ENCODE measurements at regions of chr9 and their contacts with region 1.

Region 1: DNA sequence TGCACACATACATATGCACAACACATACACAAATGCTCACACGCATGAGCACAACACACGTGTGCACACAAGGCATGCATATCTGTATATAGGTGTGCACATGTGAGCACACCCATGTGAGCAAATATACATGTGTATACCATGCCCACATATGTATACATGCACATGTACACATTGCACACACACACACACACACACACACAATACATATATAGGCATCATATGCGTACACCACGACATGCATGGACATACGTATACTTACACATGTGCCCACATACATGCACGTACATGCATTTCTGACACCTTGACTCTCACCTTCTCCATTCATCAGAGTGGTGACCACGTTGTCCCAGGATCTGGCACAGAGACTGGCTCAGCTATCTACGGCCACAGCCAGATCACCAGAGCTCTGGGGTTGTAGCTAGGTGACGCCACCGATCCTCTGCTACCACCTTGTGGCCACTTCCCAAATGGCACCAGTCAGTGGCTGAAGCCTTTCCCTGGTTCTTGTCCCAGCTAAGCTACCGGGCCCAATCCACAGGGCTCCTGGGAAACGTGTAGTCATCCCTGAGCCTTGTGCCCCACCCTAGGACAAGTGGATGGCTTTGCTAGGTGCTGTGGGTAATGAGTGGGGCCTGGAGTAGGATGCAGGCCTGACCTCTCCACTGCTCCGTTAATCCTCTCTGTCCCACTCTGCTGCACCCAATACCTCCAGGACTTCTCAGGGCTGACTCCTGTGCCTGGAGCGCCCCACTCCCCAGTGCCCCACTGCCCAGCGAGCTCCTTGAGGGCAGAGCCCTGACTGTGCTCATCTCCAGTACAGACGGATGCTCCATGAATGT is 194.4 kb downstream of the RGS3 start:
- DNase-seq: peak; percentile 82
- H3K4me3 Mint-ChIP-seq: no peak overlapping the region
- H3K27ac Mint-ChIP-seq: no peak overlapping the region
- H3K4me1 Mint-ChIP-seq: no peaks in the 10 kb centered on the region
- H3K27me3 Mint-ChIP-seq: peaks cover 30% of the 10 kb centered on the region
- CTCF ChIP-seq: peak; percentile 97

Region 2: DNA sequence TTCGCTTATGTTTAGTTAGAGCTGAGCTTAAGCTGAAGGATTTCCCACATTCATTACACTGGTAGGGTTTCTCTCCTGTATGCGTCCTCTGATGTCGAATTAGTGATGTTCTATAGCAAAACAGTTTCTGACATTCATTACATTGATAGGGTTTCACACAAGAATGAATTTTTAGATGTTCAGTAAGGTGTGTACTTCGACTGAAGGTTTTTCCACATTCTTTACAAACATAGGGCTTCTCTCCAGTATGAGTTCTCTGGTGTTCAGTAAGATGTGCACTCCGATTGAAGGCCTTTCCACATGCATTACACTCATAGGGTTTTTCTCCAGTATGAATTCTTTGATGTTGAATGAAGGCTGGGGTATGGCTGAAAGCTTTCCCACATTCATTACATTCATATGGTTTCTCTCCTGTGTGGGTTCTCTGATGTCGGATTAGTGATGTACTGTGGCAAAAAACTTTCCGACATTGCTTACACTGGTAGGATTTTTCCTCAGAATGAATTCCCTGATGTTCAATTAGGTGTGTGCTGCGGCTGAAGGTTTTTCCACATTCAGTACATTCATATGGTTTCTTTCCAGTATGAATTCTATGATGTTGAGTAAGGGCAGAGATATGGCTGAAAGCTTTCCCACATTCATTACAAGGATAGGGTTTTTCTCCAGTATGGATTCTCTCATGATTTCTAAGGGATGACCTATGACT is 660.5 kb before region 1 on chr9:
- CTCF ChIA-PET with region 1: no interaction called
- POLR2A ChIA-PET with region 1: no interaction called
- intact Hi-C with region 1: no loop called
- DNase-seq: no peak
- H3K4me3 Mint-ChIP-seq: no peak overlapping the region
- H3K27ac Mint-ChIP-seq: no peak overlapping the region
- H3K4me1 Mint-ChIP-seq: no peaks in the 10 kb centered on the region
- H3K27me3 Mint-ChIP-seq: no peaks in the 10 kb centered on the region
- CTCF ChIP-seq: no peak

Region 3: DNA sequence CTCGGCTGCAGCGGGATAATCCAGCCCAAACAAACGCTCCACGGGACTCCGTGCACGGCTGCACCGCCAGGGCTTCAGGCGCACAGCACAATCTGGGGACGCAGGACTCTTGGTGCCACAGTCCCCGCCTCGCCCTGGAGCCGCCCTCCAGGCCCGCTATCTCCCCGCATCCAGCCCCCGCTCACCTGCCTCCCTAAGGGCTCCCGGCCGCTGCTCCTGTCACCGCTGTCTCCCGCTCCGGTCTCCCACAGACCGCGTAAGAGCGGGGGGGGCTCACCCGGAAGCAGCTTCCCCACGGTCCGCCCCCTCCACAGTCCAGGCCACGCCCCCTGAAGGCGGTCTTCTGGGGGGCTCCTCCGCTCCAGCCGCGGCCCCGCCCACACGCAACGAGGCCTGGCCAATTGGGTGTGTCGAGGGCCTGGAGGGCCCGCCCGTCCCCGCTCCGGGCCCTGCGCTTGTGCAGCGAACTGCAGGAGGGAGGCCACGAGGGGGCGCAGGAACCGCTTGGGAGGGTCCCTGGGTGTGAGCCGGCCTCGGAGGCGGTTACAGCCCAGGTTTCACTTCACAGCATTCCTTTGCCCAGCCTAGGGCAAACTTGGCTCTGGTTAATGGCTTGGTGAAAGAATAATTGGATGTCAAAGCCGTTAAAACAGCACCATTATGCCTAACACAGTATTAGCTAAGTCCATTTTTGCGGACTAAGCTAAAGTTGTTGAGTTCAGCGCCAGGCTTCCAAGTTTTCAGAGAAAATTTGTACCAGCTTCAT is 256.7 kb before region 1 on chr9 and contains the start of gene ALAD:
- CTCF ChIA-PET with region 1: interaction called, 27 read pairs
- POLR2A ChIA-PET with region 1: interaction called, 4 read pairs
- intact Hi-C with region 1: loop called (anchors 2 kb)
- DNase-seq: peak; percentile 98
- H3K4me3 Mint-ChIP-seq: peak within 1 kb of the TSS; percentile 97
- H3K27ac Mint-ChIP-seq: peak within 1 kb of the TSS; percentile 82
- H3K4me1 Mint-ChIP-seq: peaks cover 12% of the 10 kb centered on the region
- H3K27me3 Mint-ChIP-seq: no peaks in the 10 kb centered on the region
- CTCF ChIP-seq: peak; percentile 86
- total RNA-seq, gene ALAD: 6.6 and 7.8 TPM in 2 replicates

Region 4: DNA sequence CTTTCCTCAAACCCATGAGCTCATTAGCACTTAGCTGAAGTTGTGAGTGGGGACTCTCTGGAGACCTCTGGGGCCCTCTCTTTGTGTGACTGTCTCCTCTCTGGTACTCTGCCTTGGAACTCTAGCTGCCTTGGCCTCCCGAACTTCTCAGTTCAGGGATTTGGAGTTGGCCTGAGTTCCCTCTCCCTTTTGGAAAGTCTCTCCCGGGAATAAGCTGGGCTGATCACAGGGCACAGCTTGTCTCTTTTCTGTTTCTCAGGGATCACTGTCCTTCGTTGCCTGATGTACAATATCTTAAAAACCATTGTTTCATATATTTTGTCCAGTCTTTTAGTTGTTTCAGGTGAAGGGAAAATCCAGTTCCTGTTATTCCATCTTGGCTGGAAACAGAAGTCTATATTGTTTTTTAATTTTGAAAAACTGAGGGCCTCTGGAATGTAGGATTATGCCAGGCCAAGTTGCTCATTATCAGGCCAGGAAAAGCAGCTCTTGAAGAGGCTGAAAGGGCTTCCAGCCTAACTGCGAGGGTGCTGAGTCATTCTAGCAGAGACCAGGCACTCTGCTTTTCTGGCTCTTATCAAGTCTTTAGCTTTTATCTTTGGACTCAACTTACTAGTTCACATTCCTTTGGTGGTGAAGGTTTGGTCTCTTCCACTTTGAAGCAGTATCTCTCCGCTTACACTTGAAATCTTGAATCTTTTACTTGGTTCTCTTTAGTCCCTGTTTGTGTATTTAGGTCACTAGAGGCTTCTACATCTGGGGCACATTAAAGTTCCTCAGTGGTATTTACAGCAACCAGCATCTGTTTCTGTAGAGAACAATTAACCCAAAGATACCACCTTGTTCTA is 202.8 kb before region 1 on chr9:
- CTCF ChIA-PET with region 1: interaction called, 317 read pairs
- POLR2A ChIA-PET with region 1: interaction called, 3 read pairs
- intact Hi-C with region 1: no loop called
- DNase-seq: peak; percentile 40
- H3K4me3 Mint-ChIP-seq: no peak overlapping the region
- H3K27ac Mint-ChIP-seq: peak overlapping the region; percentile 24
- H3K4me1 Mint-ChIP-seq: peaks cover 10% of the 10 kb centered on the region
- H3K27me3 Mint-ChIP-seq: no peaks in the 10 kb centered on the region
- CTCF ChIP-seq: no peak

Region 5: DNA sequence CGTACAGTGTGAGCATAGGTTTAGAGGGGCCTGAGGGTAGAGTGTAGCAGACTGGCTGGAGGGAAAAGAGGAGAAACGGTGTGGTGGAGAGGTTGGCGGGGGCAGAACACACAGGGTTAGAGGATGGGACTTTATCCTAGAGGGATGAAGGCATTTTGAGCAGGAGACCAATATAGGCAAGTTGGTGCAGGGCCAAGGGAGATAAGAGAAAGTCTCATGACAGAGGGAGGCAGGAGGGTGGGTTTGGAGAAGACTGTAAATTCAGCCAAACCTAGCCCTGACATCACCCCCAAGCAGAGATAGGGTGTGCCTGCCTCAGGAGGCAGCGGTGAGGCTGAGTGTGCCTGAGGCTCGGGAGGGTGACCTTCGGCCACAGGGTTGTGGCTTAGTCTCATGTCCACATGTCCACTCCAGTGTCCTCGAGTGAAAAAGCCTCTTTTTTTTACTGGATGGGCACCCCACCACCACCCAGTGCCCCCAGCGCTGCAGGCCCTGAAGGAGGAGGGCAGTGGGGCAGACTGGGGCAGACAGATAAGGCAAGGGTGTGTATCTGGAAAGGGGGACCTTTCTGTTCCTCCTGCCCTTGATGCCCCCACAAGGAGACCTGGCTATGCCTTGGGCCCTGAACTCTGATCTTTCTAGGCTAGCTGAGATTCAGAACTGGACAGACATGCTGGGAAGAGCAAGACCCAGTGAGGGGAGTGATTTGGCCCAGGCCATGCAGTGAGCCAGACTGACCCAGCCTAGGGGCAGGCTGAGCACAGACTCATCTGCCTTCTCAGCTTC is 85.7 kb before region 1 on chr9:
- CTCF ChIA-PET with region 1: interaction called, 10 read pairs
- POLR2A ChIA-PET with region 1: no interaction called
- intact Hi-C with region 1: no loop called
- DNase-seq: no peak
- H3K4me3 Mint-ChIP-seq: no peak overlapping the region
- H3K27ac Mint-ChIP-seq: peak overlapping the region; percentile 84
- H3K4me1 Mint-ChIP-seq: peaks cover 30% of the 10 kb centered on the region
- H3K27me3 Mint-ChIP-seq: no peaks in the 10 kb centered on the region
- CTCF ChIP-seq: no peak

Region 6: DNA sequence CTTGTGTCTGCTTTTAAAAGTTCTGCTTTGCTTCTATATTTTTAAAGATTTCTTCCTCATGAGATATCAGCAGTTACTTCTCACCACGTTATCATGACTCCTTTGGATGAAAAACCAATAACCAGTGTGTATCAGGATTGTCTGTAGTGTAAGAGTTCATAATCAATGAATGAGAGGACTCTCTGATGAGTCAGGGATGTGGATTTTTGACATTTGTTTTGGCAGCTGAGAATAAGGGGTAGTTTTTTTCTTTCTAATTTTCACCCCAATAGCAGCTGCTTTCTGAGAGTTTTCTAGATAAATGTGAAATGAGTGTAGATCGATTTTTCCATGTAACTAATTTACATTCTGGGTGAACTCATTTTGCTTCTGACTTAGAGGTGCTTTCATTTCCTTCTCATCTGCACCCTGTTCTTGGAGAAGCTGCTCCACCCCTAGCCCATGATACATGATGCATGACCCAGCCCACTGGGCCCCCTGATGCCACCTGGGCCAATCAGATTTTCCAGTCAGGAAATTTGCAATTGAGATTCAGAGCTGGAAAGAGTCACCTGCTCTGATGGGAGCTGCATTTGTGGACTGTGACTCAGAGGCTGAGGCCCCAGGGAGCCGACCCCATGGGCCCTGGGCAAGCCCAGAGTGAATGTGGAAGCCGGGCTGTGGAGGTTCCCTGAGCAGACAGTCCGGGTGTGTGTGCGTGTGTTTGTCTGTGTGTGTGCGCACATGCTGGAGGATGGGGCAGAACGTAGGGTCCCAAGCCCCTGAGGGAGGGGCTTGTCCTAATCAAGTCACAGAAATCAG is 35.1 kb before region 1 on chr9:
- CTCF ChIA-PET with region 1: interaction called, 21 read pairs
- POLR2A ChIA-PET with region 1: no interaction called
- intact Hi-C with region 1: no loop called
- DNase-seq: peak; percentile 62
- H3K4me3 Mint-ChIP-seq: no peak overlapping the region
- H3K27ac Mint-ChIP-seq: no peak overlapping the region
- H3K4me1 Mint-ChIP-seq: no peaks in the 10 kb centered on the region
- H3K27me3 Mint-ChIP-seq: no peaks in the 10 kb centered on the region
- CTCF ChIP-seq: no peak

Region 7: DNA sequence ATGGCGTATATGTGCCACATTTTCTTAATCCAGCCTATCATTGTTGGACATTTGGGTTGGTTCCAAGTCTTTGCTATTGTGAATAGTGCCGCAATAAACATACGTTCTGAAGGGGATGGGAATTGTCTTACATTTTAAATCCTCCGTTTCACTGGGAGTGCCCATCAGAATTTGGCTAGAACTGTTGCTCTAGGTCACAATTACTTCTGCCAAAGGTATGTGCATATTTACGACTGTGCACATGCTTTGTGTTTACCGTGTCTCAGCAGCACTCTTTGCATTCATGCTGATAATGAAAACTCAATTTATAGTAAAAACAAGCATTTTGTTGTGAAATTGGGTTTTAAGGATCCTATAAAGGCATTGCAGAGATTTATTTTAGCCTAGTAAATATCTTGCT is 66.3 kb after region 1 on chr9:
- CTCF ChIA-PET with region 1: no interaction called
- POLR2A ChIA-PET with region 1: no interaction called
- intact Hi-C with region 1: no loop called
- DNase-seq: no peak
- H3K4me3 Mint-ChIP-seq: no peak overlapping the region
- H3K27ac Mint-ChIP-seq: no peak overlapping the region
- H3K4me1 Mint-ChIP-seq: no peaks in the 10 kb centered on the region
- H3K27me3 Mint-ChIP-seq: peaks cover 14% of the 10 kb centered on the region
- CTCF ChIP-seq: no peak

Region 8: DNA sequence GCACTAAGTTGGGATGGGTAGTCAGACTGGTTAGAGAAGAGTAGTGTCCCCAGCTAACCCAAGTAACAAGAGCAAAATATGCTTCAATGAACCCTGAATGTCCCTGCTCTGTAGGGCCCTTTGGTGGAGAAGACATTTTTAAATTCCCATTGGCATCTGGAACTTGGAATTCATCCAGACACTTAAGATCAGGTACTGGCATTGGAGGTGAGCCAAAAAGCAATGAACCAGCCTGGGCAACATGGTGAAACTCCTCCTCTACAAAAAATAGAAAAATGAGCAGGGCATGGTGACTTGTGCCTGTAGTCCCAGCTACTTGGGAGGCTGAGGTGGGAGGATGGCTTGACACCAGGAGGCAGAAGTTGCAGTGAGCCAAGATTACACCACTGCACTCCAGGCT is 159.2 kb after region 1 on chr9:
- CTCF ChIA-PET with region 1: no interaction called
- POLR2A ChIA-PET with region 1: no interaction called
- intact Hi-C with region 1: no loop called
- DNase-seq: peak; percentile 43
- H3K4me3 Mint-ChIP-seq: no peak overlapping the region
- H3K27ac Mint-ChIP-seq: no peak overlapping the region
- H3K4me1 Mint-ChIP-seq: no peaks in the 10 kb centered on the region
- H3K27me3 Mint-ChIP-seq: peaks cover 52% of the 10 kb centered on the region
- CTCF ChIP-seq: no peak

Measured in MCF 10A (cell line).